IMR-90 (cell line): ENCODE measurements at regions of chr11 and their contacts with region 1.

Region 1: DNA sequence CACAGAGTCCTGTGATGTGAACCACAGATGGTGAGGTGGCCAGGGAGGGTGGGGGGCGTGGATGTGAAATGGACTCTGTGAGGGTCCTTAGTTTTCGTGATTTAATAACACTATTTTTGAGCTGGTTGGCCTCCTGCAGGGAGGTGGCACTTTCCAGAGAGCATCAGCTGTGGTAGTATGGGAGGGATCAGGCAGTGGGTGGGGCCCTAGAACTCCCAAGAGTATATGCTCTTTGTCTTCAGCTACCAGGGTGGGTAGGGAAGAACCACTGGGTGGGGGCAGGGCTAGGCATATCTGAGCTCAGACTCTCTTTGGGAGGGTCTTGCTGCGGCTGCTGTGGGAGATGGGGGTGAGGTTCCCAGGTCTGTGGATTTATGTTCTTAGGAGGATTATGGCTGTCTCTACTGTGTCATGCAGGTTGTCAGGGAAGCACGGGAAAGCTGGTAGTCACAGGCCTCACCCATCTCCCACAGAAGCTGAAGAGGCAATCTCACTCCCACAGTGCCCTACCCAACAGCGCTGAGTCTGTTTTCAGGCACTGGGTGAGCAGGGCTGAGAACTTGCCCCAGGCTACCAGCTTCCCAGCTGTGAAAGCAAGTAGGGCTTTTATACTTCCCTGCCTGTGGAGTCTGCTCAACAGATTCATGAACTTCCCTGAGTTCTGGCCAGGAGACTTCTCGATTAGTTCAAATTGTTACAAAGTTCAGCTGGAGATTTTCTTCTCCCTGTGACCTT is 47.9 kb upstream of the SNX19 start:
- DNase-seq: no peak
- ATAC-seq: no peak
- H3K4me3 ChIP-seq: no peak overlapping the region
- H3K27ac ChIP-seq: no peak overlapping the region
- H3K4me1 ChIP-seq: no peaks in the 10 kb centered on the region
- H3K27me3 ChIP-seq: peaks cover 2% of the 10 kb centered on the region
- CTCF ChIP-seq: no peak
- POLR2A ChIP-seq: no peak
- RAD21 ChIP-seq: no peak

Region 2: GRCh38 chr11:130817330-130817944 is 146.8 kb before region 1 on chr11:
- CTCF ChIA-PET with region 1: no interaction called
- POLR2A ChIA-PET with region 1: no interaction called
- dilution Hi-C with region 1: no loop called
- in situ Hi-C with region 1: no loop called
- intact Hi-C with region 1: no loop called
- DNase-seq: peak; percentile 86
- ATAC-seq: peak; percentile 75
- H3K4me3 ChIP-seq: no peak overlapping the region
- H3K27ac ChIP-seq: no peak overlapping the region
- H3K4me1 ChIP-seq: no peaks in the 10 kb centered on the region; the same call in 1 of the 2 replicates
- H3K27me3 ChIP-seq: peaks cover 43% of the 10 kb centered on the region
- CTCF ChIP-seq: no peak
- POLR2A ChIP-seq: no peak
- RAD21 ChIP-seq: no peak

Region 3: DNA sequence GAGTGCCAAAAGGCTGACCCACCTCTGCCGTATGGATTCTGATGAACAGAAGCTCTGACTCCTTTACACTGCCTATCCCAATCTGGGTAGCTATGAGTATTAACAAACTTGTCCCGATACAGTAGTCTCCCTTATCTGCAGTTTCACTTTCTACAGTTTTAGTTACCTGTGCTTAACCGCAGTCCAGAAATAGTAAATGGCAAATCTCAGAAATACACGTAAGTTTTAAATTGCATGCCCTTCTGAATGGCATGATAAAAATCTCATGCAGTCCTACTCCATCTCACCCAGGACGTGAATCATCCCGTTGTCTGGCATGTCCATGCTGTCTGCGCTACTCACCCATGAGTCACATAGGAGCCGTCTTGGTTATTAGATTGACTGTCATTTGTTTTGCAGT is 116.7 kb before region 1 on chr11:
- CTCF ChIA-PET with region 1: no interaction called
- POLR2A ChIA-PET with region 1: interaction called, 14 read pairs
- dilution Hi-C with region 1: no loop called
- in situ Hi-C with region 1: no loop called
- intact Hi-C with region 1: no loop called
- DNase-seq: peak; percentile 87
- ATAC-seq: peak; percentile 79
- H3K4me3 ChIP-seq: peak overlapping the region; percentile 26; the same call in 1 of the 2 replicates
- H3K27ac ChIP-seq: no peak overlapping the region; the same call in 1 of the 2 replicates
- H3K4me1 ChIP-seq: peaks cover 12% of the 10 kb centered on the region
- H3K27me3 ChIP-seq: no peaks in the 10 kb centered on the region
- CTCF ChIP-seq: no peak
- POLR2A ChIP-seq: no peak
- RAD21 ChIP-seq: no peak

Region 4: GRCh38 chr11:131136486-131136885 is 172.3 kb after region 1 on chr11:
- CTCF ChIA-PET with region 1: no interaction called
- POLR2A ChIA-PET with region 1: no interaction called
- dilution Hi-C with region 1: no loop called
- in situ Hi-C with region 1: no loop called
- intact Hi-C with region 1: no loop called
- DNase-seq: peak; percentile 83
- ATAC-seq: peak; percentile 88
- H3K4me3 ChIP-seq: no peak overlapping the region
- H3K27ac ChIP-seq: peak overlapping the region; percentile 62
- H3K4me1 ChIP-seq: peaks cover 15% of the 10 kb centered on the region
- H3K27me3 ChIP-seq: no peaks in the 10 kb centered on the region
- CTCF ChIP-seq: no peak
- POLR2A ChIP-seq: no peak
- RAD21 ChIP-seq: no peak

Region 5: DNA sequence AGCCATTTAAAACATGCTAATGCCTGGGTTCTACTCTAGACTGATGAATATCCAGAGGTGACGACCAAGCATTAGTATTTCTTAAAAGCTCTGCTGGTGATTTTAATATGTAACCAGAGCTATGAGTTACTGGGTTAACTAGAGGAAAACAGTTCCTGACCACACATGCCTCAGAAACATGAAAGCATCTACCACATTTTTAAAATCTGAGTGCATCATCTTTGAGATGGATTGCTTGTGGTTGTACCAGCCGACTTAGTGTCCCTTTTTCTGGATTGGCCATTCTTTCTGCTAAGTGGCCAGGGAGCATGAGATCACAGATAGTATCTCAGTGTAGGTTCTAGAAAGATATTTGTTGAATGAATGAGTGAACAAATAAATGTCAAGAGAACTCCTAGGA is 558.6 kb after region 1 on chr11:
- CTCF ChIA-PET with region 1: no interaction called
- POLR2A ChIA-PET with region 1: no interaction called
- dilution Hi-C with region 1: no loop called
- in situ Hi-C with region 1: no loop called
- intact Hi-C with region 1: no loop called
- DNase-seq: no peak
- ATAC-seq: no peak
- H3K4me3 ChIP-seq: no peak overlapping the region
- H3K27ac ChIP-seq: no peak overlapping the region
- H3K4me1 ChIP-seq: no peaks in the 10 kb centered on the region
- H3K27me3 ChIP-seq: no peaks in the 10 kb centered on the region
- CTCF ChIP-seq: no peak
- POLR2A ChIP-seq: no peak
- RAD21 ChIP-seq: no peak